ENCODE measurements at regions of chr3 and their contacts with region 1.

Region 1: GRCh38 chr3:172710664-172711453 is at the start of gene NCEH1:
- DNase-seq: peak; percentile 98
- H3K4me3 ChIP-seq: peak within 1 kb of the TSS; percentile 79 to 89 (median 79)
- H3K27ac ChIP-seq: peak within 1 kb of the TSS; percentile 93
- H3K4me1 ChIP-seq: peaks cover 24% of the 10 kb centered on the region
- H3K27me3 ChIP-seq: no peaks in the 10 kb centered on the region
- CTCF ChIP-seq: peak; percentile 89 to 91
- total RNA-seq, gene NCEH1: 13.7 to 44.3 TPM

Region 2: DNA sequence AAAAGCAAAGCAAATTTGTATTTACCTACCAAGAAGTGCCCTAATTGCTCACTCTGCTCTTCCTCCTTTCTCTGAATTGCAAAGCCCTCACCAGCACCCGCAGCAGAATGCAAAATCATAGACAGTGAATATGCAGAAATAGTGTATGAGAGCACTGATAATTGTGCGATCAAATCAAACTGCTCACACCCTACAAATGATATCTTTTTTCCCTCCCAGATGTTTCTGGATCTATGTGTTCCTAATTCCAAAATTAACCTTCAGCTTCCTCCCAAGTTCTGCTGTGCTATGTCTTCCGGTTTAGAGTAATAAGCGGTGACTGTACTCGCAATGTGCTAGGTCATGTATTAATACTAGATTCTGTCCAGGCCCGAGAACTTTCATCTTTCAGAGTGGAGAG is 266.0 kb before region 1 on chr3:
- CTCF ChIA-PET with region 1: no interaction called
- dilution Hi-C with region 1: no loop called
- in situ Hi-C with region 1: no loop called
- intact Hi-C with region 1: no loop called
- DNase-seq: no peak
- H3K4me3 ChIP-seq: no peak overlapping the region
- H3K27ac ChIP-seq: no peak overlapping the region
- H3K4me1 ChIP-seq: no peaks in the 10 kb centered on the region
- H3K27me3 ChIP-seq: peaks cover 34% of the 10 kb centered on the region
- CTCF ChIP-seq: no peak

Region 3: GRCh38 chr3:172595641-172596393 is 115.0 kb before region 1 on chr3:
- CTCF ChIA-PET with region 1: no interaction called
- dilution Hi-C with region 1: no loop called
- in situ Hi-C with region 1: no loop called
- intact Hi-C with region 1: loop called (anchors 5 kb)
- DNase-seq: peak; percentile 65
- H3K4me3 ChIP-seq: peak overlapping the region; percentile 11 to 23 (median 11)
- H3K27ac ChIP-seq: peak overlapping the region; percentile 28
- H3K4me1 ChIP-seq: peaks cover 8% of the 10 kb centered on the region
- H3K27me3 ChIP-seq: no peaks in the 10 kb centered on the region
- CTCF ChIP-seq: peak; percentile 86 to 90

Region 4: GRCh38 chr3:172673210-172673679 is 37.6 kb before region 1 on chr3:
- CTCF ChIA-PET with region 1: interaction called, 5 read pairs
- dilution Hi-C with region 1: no loop called
- in situ Hi-C with region 1: no loop called
- intact Hi-C with region 1: loop called (anchors 1 kb)
- DNase-seq: peak; percentile 73
- H3K4me3 ChIP-seq: no peak overlapping the region
- H3K27ac ChIP-seq: peak overlapping the region; percentile 1
- H3K4me1 ChIP-seq: peaks cover 35% of the 10 kb centered on the region
- H3K27me3 ChIP-seq: no peaks in the 10 kb centered on the region
- CTCF ChIP-seq: peak; percentile 67 to 78

Region 5: DNA sequence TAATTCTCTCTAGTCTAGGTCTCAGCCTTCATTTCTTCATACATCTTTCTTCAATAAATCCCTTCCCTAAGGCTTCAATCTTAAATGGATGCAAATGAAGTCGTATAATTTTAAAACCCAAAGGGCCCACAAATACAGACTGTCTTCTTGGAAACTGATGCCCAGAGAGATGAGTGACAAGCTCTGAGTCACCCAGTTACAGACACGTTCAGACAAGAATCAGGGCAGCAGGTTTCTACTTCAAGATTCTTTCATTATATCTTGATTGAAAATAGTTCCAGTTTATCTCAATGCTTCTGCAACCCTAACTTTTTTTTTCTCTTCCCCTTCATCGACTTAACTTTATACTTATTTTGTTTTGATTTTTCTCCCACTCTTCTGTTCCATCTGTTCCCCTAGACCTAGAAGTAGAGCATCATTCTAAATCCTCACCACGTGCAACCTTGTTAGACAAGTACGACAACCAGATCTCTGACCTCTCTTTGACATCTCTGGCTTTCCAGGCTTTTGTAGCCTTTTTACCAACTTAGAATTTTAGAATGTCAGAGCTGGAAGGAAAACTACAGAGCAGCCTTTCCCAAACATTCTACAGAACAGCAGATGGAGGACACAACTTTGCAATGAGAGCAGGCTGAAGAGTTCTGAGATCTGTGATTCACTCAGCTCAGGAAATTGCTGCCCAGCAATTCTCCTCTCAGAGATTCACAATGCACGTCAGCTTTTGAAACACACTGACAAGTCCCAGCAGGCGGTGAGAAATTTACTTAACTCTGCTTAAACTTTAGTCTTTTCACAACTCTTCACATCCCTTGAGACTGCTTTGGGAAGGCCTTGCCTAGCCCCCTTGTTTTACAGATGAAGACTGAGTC is 25.3 kb before region 1 on chr3:
- CTCF ChIA-PET with region 1: interaction called, 5 read pairs
- dilution Hi-C with region 1: no loop called
- in situ Hi-C with region 1: no loop called
- intact Hi-C with region 1: loop called (anchors 1 kb)
- DNase-seq: peak; percentile 84
- H3K4me3 ChIP-seq: peak overlapping the region in 2 of 3 experiments; percentile 32 to 37
- H3K27ac ChIP-seq: peak overlapping the region; percentile 82
- H3K4me1 ChIP-seq: peaks cover 36% of the 10 kb centered on the region
- H3K27me3 ChIP-seq: no peaks in the 10 kb centered on the region
- CTCF ChIP-seq: no peak

Region 6: GRCh38 chr3:172836390-172836997 is 125.6 kb after region 1 on chr3:
- CTCF ChIA-PET with region 1: no interaction called
- dilution Hi-C with region 1: no loop called
- in situ Hi-C with region 1: no loop called
- intact Hi-C with region 1: no loop called
- DNase-seq: peak; percentile 27
- H3K4me3 ChIP-seq: no peak overlapping the region
- H3K27ac ChIP-seq: no peak overlapping the region
- H3K4me1 ChIP-seq: no peaks in the 10 kb centered on the region
- H3K27me3 ChIP-seq: peaks cover 9% of the 10 kb centered on the region
- CTCF ChIP-seq: peak; percentile 70 to 71

Region 7: DNA sequence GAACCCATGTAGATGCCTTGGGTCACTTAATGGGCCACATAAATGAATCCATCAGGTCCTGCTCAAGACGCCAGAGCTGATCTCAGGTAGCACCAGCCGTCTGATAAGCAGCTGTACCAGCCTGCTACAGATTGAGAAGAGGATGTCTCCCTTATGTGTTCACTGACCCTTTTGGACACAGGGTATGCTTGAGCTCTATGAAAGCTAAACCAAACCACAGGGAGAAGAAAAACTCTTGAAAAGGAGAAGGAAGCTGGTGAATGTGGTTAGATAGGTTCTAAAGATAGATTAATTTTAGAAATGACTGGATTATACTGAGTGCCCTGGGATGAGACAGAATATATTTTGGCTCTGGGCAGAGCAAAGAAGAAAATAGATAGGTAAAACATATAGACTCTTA is 242.7 kb after region 1 on chr3:
- CTCF ChIA-PET with region 1: no interaction called
- dilution Hi-C with region 1: no loop called
- in situ Hi-C with region 1: no loop called
- intact Hi-C with region 1: no loop called
- DNase-seq: no peak
- H3K4me3 ChIP-seq: no peak overlapping the region
- H3K27ac ChIP-seq: no peak overlapping the region
- H3K4me1 ChIP-seq: no peaks in the 10 kb centered on the region
- H3K27me3 ChIP-seq: no peaks in the 10 kb centered on the region
- CTCF ChIP-seq: no peak

Measured in mammary epithelial cell (primary cell).